Naive thymus-derived CD4-positive, alpha-beta T cell (primary cell): ENCODE measurements at regions of chr3 and their contacts with region 1.

Region 1: GRCh38 chr3:59749291-59749690 is 699.5 kb upstream of the CFAP20DC start:
- DNase-seq: no peak
- ATAC-seq: no peak
- H3K4me3 ChIP-seq: no peak overlapping the region
- H3K4me3 Mint-ChIP-seq: no peak overlapping the region
- H3K27ac ChIP-seq: no peak overlapping the region
- H3K27ac Mint-ChIP-seq: peak overlapping the region in 4 of 9 donors; percentile 14 to 80 (median 26)
- H3K4me1 ChIP-seq: peaks cover 0 to 12% of the 10 kb centered on the region in 2 donors
- H3K4me1 Mint-ChIP-seq: peaks cover 17 to 46% (median 37%) of the 10 kb centered on the region in 7 donors
- H3K27me3 ChIP-seq: no peaks in the 10 kb centered on the region
- H3K27me3 Mint-ChIP-seq: no peaks in the 10 kb centered on the region

Region 2: GRCh38 chr3:59444294-59444671 is 305.0 kb before region 1 on chr3:
- CTCF ChIA-PET with region 1: no interaction called
- POLR2A ChIA-PET with region 1: no interaction called
- intact Hi-C with region 1: loop called in 1 of 2 experiments (anchors 10 kb)
- DNase-seq: peak in 6 of 9 donors; percentile 8 to 41 (median 22)
- ATAC-seq: peak; percentile 72
- H3K4me3 ChIP-seq: peak overlapping the region; percentile 51
- H3K4me3 Mint-ChIP-seq: peak overlapping the region; percentile 1 to 85 (median 78)
- H3K27ac ChIP-seq: peak overlapping the region; percentile 73
- H3K27ac Mint-ChIP-seq: peak overlapping the region; percentile 88 to 98 (median 95)
- H3K4me1 ChIP-seq: peaks cover 15 to 53% of the 10 kb centered on the region in 2 donors
- H3K4me1 Mint-ChIP-seq: peaks cover 31 to 97% (median 67%) of the 10 kb centered on the region in 7 donors
- H3K27me3 ChIP-seq: no peaks in the 10 kb centered on the region
- H3K27me3 Mint-ChIP-seq: no peaks in the 10 kb centered on the region

Region 3: DNA sequence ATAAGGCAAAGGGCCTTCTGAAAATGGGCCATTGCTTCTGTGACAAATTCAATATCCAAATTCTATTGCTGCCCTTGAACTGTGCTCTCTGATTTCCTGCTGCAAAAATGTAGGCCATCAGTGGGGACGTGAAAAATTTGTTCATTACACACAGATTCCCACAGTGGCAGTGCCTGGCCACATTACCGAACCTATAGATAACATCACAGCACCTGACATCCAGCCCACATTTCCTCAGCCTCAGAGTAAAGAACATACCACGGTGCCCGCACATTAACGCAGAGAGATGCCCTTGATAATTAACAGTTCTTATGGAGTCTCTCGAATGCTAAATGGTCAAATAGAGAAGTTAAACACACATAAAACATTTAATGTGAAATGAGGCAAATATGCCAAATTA is 232.1 kb after region 1 on chr3:
- CTCF ChIA-PET with region 1: no interaction called
- POLR2A ChIA-PET with region 1: no interaction called
- intact Hi-C with region 1: no loop called
- DNase-seq: peak in 1 of 9 donors; percentile 25
- ATAC-seq: peak; percentile 43
- H3K4me3 ChIP-seq: no peak overlapping the region
- H3K4me3 Mint-ChIP-seq: peak overlapping the region; percentile 16 to 76 (median 56)
- H3K27ac ChIP-seq: no peak overlapping the region
- H3K27ac Mint-ChIP-seq: peak overlapping the region in 8 of 9 donors; percentile 52 to 88 (median 74)
- H3K4me1 ChIP-seq: peaks cover 0 to 60% of the 10 kb centered on the region in 2 donors
- H3K4me1 Mint-ChIP-seq: peaks cover 28 to 92% (median 86%) of the 10 kb centered on the region in 7 donors
- H3K27me3 ChIP-seq: no peaks in the 10 kb centered on the region
- H3K27me3 Mint-ChIP-seq: no peaks in the 10 kb centered on the region